ENCODE measurements at regions of chr4 and their contacts with region 1.

Region 1: DNA sequence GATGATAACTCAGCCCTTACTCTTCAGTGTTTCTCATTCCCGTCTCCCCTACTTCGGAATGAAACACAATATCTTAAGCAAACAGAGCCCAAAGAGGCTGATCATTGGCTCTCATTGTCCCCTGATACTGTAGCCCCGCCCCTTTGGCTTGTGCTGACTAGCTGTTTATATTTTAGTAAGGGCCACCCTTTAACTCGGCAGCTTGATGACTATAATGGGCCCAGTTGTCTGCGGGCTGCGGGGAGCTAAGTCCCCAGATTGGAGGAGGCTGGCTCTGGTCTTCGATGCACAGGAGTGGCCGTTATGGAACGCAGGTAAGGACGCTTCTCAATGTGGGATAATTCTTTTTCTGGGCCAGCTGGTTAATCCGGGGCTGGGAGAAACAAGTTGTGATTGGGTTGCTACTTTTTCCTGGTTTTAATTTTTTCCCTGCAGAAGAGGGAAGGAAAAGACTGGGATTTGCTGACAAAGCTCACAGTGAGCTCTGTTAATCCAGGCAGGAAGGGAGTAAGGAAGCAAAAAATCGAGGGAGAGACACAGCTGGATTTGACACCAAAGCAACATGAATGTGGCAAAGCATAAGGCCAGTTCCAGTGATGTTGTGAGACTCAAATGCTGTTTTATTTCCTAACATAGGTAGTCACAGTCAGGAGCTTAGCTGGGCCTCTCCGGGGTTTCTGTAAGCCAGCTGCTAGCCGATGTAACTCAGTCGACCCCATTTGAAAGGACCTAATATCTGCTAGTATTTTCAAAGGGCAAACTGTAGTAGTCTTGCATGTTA is at the start of gene TRIM2:
- DNase-seq: peak; percentile 71
- ATAC-seq: peak; percentile 79
- H3K4me3 ChIP-seq: peak within 1 kb of the TSS; percentile 32 to 67 (median 51)
- H3K27ac ChIP-seq: no peak within 1 kb of the TSS
- H3K4me1 ChIP-seq: peaks cover 36% of the 10 kb centered on the region
- H3K27me3 ChIP-seq: peaks cover 0 to 16% of the 10 kb centered on the region in 2 experiments; a peak in 2 of 5 replicates
- CTCF ChIP-seq: no peak
- EP300 ChIP-seq: no peak
- POLR2A ChIP-seq: peak in 1 of 2 experiments; percentile 33; a peak in 1 of 4 replicates
- RAD21 ChIP-seq: no peak
- total RNA-seq, gene TRIM2: 4.2 and 7.0 TPM in 2 replicates

Region 2: DNA sequence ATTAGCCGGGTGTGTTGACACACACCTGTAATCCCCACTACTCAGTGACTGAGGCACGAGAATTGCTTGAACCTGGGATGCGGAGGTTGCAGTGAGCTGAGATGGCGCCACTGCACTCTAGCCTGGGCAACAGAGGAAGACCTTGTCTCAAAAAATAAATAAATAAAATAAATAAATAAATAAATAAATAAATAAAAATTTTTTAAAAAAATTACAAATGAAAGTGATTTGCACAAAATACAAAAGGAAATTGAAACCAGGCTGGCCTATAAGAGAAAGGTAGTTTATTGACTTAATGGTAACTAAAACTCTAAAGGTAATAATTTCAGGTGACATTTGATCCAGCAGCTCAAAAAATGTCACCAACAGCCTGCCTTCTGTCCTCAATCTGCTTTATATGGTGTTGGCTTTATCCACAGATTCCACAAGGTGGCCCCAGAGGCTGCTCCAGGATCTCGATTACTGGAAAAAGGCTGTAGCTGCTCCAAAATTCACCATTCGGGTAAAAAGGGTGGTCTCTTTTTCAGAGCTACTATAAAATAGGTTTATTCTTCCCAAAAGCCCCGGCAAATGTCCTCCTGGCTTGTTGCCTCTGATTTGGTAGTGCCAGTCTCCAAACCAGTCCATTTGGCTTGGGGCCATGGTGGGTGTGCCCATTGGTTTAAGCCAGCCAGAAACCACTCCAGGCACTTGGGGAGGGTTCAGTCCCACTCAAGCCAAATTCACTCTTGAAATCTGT is 61.6 kb before region 1 on chr4:
- CTCF ChIA-PET with region 1: no interaction called
- POLR2A ChIA-PET with region 1: no interaction called
- in situ Hi-C with region 1: no loop called
- intact Hi-C with region 1: loop called (anchors 1 kb)
- DNase-seq: peak; percentile 63
- ATAC-seq: peak; percentile 88
- H3K4me3 ChIP-seq: no peak overlapping the region; a peak in 1 of 6 replicates
- H3K27ac ChIP-seq: no peak overlapping the region
- H3K4me1 ChIP-seq: peaks cover 14% of the 10 kb centered on the region
- H3K27me3 ChIP-seq: 0 out of 5 replicates have a peak, but pooled peaks cover 0 to 2% of the 10 kb centered on the region in 2 experiments
- CTCF ChIP-seq: peak; percentile 77
- EP300 ChIP-seq: no peak
- POLR2A ChIP-seq: no peak
- RAD21 ChIP-seq: peak; percentile 63

Region 3: GRCh38 chr4:153221783-153222706 is 17.6 kb after region 1 on chr4:
- CTCF ChIA-PET with region 1: no interaction called
- POLR2A ChIA-PET with region 1: interaction called, 3 read pairs
- in situ Hi-C with region 1: no loop called
- intact Hi-C with region 1: loop called (anchors 2 kb)
- DNase-seq: no peak
- ATAC-seq: peak; percentile 71
- H3K4me3 ChIP-seq: peak overlapping the region; percentile 71 to 74 (median 72)
- H3K27ac ChIP-seq: peak overlapping the region; percentile 62
- H3K4me1 ChIP-seq: peaks cover 32% of the 10 kb centered on the region
- H3K27me3 ChIP-seq: peaks cover 0 to 2% of the 10 kb centered on the region in 2 experiments; a peak in 1 of 5 replicates
- CTCF ChIP-seq: no peak
- EP300 ChIP-seq: no peak
- POLR2A ChIP-seq: 0 out of 4 replicates have a peak, but pooled peaks of 1 of the 2 experiments have one; percentile 9
- RAD21 ChIP-seq: no peak

Region 4: GRCh38 chr4:153318696-153319320 is 114.4 kb after region 1 on chr4:
- CTCF ChIA-PET with region 1: interaction called, 13 read pairs
- POLR2A ChIA-PET with region 1: no interaction called
- in situ Hi-C with region 1: no loop called
- intact Hi-C with region 1: loop called (anchors 1 kb)
- DNase-seq: peak; percentile 40
- ATAC-seq: peak; percentile 78
- H3K4me3 ChIP-seq: no peak overlapping the region
- H3K27ac ChIP-seq: no peak overlapping the region
- H3K4me1 ChIP-seq: peaks cover 13% of the 10 kb centered on the region
- H3K27me3 ChIP-seq: no peaks in the 10 kb centered on the region
- CTCF ChIP-seq: peak; percentile 67
- EP300 ChIP-seq: no peak
- POLR2A ChIP-seq: no peak
- RAD21 ChIP-seq: 0 out of 2 replicates have a peak, but pooled peaks have one; percentile 41

Region 5: GRCh38 chr4:153643406-153644383 is 439.3 kb after region 1 on chr4:
- CTCF ChIA-PET with region 1: no interaction called
- POLR2A ChIA-PET with region 1: no interaction called
- in situ Hi-C with region 1: no loop called
- intact Hi-C with region 1: loop called (anchors 5 kb)
- DNase-seq: peak; percentile 66
- ATAC-seq: peak; percentile 68
- H3K4me3 ChIP-seq: peak overlapping the region in 1 of 3 experiments; percentile 16; a peak in 1 of 6 replicates
- H3K27ac ChIP-seq: no peak overlapping the region
- H3K4me1 ChIP-seq: peaks cover 22% of the 10 kb centered on the region
- H3K27me3 ChIP-seq: no peaks in the 10 kb centered on the region; a peak in 1 of 5 replicates
- CTCF ChIP-seq: peak; percentile 60
- EP300 ChIP-seq: no peak
- POLR2A ChIP-seq: no peak
- RAD21 ChIP-seq: no peak